Dendritic cell treated with granulocyte-macrophage colony-stimulating factor and Interleukin-4, amounts not matched to agents 40 ng/mL and 50 ng/mL, for 4 days (primary cell): ENCODE measurements at regions of chr1 and their contacts with region 1.

Region 1: DNA sequence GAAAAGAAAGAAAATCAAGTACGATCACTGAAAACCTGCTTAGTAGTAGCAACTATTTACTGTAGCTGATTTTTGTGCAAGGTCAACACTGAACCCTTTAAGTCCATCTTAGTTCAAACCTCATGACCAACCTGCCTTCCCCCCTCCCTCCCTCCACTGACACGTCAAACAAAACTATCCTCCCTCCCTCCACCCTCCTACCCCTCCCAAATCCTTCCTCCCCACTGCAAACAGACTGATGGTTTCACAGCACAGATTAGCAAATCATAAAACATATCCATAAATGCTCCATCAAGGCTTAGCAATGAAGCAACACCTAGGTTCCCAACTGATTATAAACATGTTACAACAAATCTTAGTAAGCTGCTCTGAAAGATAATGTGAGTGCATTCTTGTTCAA is 164.3 kb upstream of the GREM2 start:
- H3K4me3 Mint-ChIP-seq: no peak overlapping the region
- H3K27ac Mint-ChIP-seq: no peak overlapping the region
- H3K4me1 Mint-ChIP-seq: no peaks in the 10 kb centered on the region
- H3K27me3 Mint-ChIP-seq: no peaks in the 10 kb centered on the region

Region 2: GRCh38 chr1:242754125-242754524 is 1977.9 kb after region 1 on chr1:
- intact Hi-C with region 1: loop called (anchors 10 kb)
- H3K4me3 Mint-ChIP-seq: no peak overlapping the region
- H3K27ac Mint-ChIP-seq: no peak overlapping the region
- H3K4me1 Mint-ChIP-seq: no peaks in the 10 kb centered on the region
- H3K27me3 Mint-ChIP-seq: no peaks in the 10 kb centered on the region